ENCODE measurements at regions of chr15 and their contacts with region 1.

Region 1: GRCh38 chr15:66851226-66852071 is 149.4 kb downstream of the SMAD6 start:
- DNase-seq: peak; percentile 92
- H3K4me3 ChIP-seq: no peak overlapping the region
- H3K27ac ChIP-seq: no peak overlapping the region
- H3K4me1 ChIP-seq: peaks cover 6% of the 10 kb centered on the region
- H3K27me3 ChIP-seq: no peaks in the 10 kb centered on the region
- CTCF ChIP-seq: peak; percentile 95

Region 2: GRCh38 chr15:66440501-66440900 is 410.9 kb before region 1 on chr15:
- CTCF ChIA-PET with region 1: no interaction called
- POLR2A ChIA-PET with region 1: no interaction called
- intact Hi-C with region 1: no loop called
- DNase-seq: no peak
- H3K4me3 ChIP-seq: no peak overlapping the region
- H3K27ac ChIP-seq: no peak overlapping the region
- H3K4me1 ChIP-seq: no peaks in the 10 kb centered on the region
- H3K27me3 ChIP-seq: no peaks in the 10 kb centered on the region
- CTCF ChIP-seq: no peak

Region 3: GRCh38 chr15:66619151-66619903 is 232.1 kb before region 1 on chr15:
- CTCF ChIA-PET with region 1: interaction called, 13 read pairs
- POLR2A ChIA-PET with region 1: no interaction called
- intact Hi-C with region 1: loop called (anchors 5 kb)
- DNase-seq: peak; percentile 69
- H3K4me3 ChIP-seq: no peak overlapping the region
- H3K27ac ChIP-seq: no peak overlapping the region
- H3K4me1 ChIP-seq: peaks cover 31% of the 10 kb centered on the region
- H3K27me3 ChIP-seq: no peaks in the 10 kb centered on the region
- CTCF ChIP-seq: peak; percentile 84

Region 4: GRCh38 chr15:66700802-66701421 is 150.5 kb before region 1 on chr15:
- CTCF ChIA-PET with region 1: interaction called, 9 read pairs
- POLR2A ChIA-PET with region 1: no interaction called
- intact Hi-C with region 1: loop called (anchors 2 kb)
- DNase-seq: peak; percentile 97
- H3K4me3 ChIP-seq: peak overlapping the region; percentile 63
- H3K27ac ChIP-seq: peak overlapping the region; percentile 82
- H3K4me1 ChIP-seq: peaks cover 26% of the 10 kb centered on the region
- H3K27me3 ChIP-seq: no peaks in the 10 kb centered on the region
- CTCF ChIP-seq: no peak

Region 5: DNA sequence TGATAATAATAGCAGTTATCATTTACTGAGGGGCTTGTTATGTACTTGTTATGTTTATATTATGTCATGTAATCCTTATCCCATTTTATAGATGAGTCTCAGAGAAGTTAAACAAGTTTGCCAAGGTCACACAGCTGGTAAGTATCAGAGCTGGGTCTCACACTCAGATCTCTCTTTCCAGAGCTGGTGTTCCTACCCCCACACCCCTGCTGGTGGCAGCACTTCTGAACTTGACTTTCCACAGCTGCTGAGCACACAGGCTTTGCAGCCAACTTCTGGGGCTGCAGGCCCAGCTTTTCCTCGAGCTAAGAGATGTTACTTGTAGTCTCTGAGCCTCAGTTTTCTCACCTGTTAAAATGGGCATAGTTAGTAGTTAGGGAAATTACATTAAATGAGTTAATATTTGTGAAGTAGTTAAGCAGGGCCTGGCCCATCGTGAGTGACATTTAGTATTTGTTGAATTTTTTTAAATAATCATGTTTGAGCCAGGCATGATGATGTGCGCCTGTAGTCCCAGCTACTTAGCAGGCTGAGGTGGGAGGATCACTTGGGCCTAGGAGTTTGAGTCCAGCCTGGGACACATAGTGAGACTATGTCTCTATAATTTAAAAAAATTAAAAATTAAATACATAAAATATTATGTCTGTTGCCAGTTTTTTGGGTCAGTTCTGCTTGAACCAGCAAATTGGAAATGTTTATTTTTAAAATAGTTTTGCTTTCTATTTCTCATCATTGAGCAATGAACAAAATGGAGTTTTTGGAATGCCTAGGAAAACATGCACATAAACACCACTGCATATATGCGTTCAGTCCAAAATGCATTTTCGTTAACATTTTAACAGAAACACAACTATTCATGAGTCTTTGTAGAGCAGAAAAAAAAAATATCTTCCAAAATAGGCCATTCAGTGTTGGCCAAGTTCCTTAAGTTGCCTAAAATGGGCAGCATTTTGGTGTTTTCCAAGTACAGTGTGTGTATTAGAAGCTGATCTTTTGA is 62.1 kb before region 1 on chr15:
- CTCF ChIA-PET with region 1: interaction called, 9 read pairs
- POLR2A ChIA-PET with region 1: no interaction called
- intact Hi-C with region 1: loop called (anchors 5 kb)
- DNase-seq: peak; percentile 66
- H3K4me3 ChIP-seq: no peak overlapping the region
- H3K27ac ChIP-seq: no peak overlapping the region
- H3K4me1 ChIP-seq: no peaks in the 10 kb centered on the region
- H3K27me3 ChIP-seq: no peaks in the 10 kb centered on the region
- CTCF ChIP-seq: peak; percentile 56

Region 6: DNA sequence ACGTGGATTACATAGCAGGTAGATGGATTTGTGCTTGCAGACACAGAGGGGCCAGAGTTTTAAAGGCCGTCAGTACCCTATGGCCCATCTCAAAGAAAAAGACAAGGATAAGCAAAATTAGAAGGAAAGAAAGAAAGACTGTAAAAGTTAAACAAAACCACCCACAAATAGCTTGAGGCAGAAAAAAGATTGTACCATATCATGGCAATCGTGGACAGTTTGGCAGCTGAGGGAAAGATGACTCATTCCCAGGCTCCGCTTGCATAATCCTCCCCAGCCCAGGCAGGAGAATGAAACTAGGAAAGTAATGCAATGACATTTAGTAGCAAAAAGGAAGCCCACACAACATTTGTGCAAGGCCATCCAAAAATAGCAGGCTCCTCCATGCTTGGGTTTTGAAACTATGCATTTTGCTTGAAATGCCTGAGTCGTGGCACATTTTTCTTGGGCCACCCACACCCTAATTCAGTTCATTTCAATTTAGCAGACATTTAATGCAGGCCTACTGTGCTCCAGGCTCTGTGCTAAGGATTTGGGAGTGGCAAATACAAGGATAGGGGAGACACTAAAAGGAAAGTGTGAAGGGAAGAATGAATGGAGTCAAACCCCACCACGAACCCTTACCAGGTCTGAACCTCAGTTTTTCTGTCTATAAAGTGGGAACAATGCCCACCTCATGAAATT is 173.0 kb after region 1 on chr15:
- CTCF ChIA-PET with region 1: no interaction called
- POLR2A ChIA-PET with region 1: no interaction called
- intact Hi-C with region 1: no loop called
- DNase-seq: peak; percentile 94
- H3K4me3 ChIP-seq: no peak overlapping the region
- H3K27ac ChIP-seq: peak overlapping the region; percentile 61
- H3K4me1 ChIP-seq: peaks cover 27% of the 10 kb centered on the region
- H3K27me3 ChIP-seq: no peaks in the 10 kb centered on the region
- CTCF ChIP-seq: no peak

Region 7: GRCh38 chr15:67065444-67066093 is 214.1 kb after region 1 on chr15 and contains the start of gene SMAD3:
- CTCF ChIA-PET with region 1: interaction called, 11 read pairs
- POLR2A ChIA-PET with region 1: no interaction called
- intact Hi-C with region 1: no loop called
- DNase-seq: peak; percentile 94
- H3K4me3 ChIP-seq: peak within 1 kb of the TSS; percentile 98
- H3K27ac ChIP-seq: peak within 1 kb of the TSS; percentile 86
- H3K4me1 ChIP-seq: peaks cover 24% of the 10 kb centered on the region
- H3K27me3 ChIP-seq: no peaks in the 10 kb centered on the region
- CTCF ChIP-seq: no peak
- total RNA-seq, gene SMAD3: 31.0 and 43.0 TPM in 2 replicates